PC-9 (cell line): ENCODE measurements at regions of chrX and their contacts with region 1.

Region 1: DNA sequence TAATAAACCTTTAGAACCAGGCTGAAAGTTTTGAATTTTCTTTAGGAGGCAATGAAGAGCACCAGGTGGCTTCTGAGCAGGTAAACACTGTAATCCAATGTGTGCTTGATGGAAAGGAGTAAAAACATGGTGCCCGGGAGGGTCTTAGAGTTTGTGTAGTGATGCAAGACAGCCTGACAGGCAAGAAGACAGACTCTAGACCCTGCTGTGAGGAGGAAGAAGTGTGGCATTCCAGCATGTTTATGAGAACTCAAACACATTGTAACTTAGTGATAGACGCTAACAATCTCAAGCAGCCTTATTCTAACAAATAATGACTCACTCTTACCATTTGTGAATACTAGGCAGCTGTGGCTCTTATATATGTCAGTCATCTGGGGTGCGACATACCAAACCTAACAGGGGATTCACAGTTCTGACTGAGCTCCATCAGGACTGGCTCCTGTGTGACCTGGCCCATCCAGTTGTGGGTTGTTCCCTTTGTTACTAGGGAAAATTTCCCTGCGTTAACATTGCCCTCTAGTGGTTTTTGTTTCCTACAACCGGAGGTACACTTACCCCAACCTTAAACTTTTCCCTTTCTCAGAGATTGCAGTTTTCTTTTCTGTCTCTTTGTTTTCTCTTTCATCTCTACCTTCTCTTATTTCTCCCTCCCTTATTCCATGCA is 53.8 kb downstream of the VSIG4 start:
- DNase-seq: peak; percentile 20 to 35
- H3K4me3 ChIP-seq: no peak overlapping the region
- H3K27ac ChIP-seq: no peak overlapping the region
- H3K4me1 ChIP-seq: no peaks in the 10 kb centered on the region
- H3K27me3 ChIP-seq: no peaks in the 10 kb centered on the region
- CTCF ChIP-seq: peak; percentile 65

Region 2: GRCh38 chrX:65331371-65331770 is 654.7 kb before region 1 on chrX:
- CTCF ChIA-PET with region 1: no interaction called
- POLR2A ChIA-PET with region 1: no interaction called
- intact Hi-C with region 1: no loop called
- DNase-seq: no peak
- H3K4me3 ChIP-seq: no peak overlapping the region
- H3K27ac ChIP-seq: no peak overlapping the region
- H3K4me1 ChIP-seq: no peaks in the 10 kb centered on the region
- H3K27me3 ChIP-seq: no peaks in the 10 kb centered on the region
- CTCF ChIP-seq: no peak

Region 3: DNA sequence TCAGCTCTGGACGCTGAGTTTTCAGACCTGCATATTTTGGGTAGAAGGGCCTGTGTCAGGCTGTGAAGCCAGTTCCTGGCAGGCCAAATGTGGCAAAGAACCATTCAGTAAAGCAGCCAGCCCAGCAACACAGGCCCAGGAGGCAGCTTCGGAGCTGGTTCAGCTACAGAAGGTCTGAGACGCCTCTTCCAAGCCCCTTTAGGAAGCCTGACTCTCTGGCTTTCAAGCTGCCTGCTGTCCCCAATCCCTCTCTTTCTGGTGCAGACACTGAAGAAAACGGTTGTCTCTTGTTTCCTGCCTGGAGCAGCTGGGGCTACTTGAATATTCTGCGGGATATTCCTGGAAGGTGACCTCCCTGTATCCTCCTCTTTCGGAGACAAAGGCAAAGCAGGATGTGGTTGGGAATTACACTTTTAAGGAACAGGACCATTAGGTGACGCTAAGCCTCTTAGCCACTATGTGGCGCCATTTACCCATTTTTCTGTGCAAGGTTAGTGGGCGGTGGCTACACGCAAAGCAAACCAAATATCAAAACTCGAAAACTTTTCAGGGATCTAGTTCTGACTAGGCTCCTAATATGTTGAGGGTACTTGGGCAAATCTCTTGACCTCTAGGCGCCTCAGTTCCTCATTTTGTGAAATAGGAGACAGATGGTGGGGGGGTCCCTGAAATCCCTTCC is 404.3 kb before region 1 on chrX:
- CTCF ChIA-PET with region 1: no interaction called
- POLR2A ChIA-PET with region 1: interaction called, 38 read pairs
- intact Hi-C with region 1: loop called (anchors 1 kb)
- DNase-seq: peak in 1 of 2 experiments; percentile 49
- H3K4me3 ChIP-seq: no peak overlapping the region
- H3K27ac ChIP-seq: no peak overlapping the region
- H3K4me1 ChIP-seq: no peaks in the 10 kb centered on the region
- H3K27me3 ChIP-seq: no peaks in the 10 kb centered on the region
- CTCF ChIP-seq: peak; percentile 81

Region 4: DNA sequence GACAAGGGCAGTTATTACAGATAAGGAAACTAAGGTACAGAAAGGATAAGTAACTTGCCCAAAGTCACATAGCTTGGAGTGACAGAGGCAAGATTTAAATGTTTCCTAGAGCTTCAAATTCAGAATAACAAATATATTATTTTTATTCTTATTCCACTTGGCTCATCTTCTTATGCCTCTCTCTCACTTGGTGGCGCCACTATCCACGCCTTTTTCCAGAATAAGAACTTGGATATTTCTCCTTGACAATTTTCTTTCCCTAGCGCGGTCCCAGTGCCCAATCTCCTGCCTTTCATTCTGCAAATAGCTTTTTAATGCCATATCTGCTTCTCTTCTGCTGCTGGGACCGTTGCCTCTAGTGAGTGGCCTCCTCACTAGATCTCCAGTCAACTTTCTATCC is 240.1 kb before region 1 on chrX:
- CTCF ChIA-PET with region 1: no interaction called
- POLR2A ChIA-PET with region 1: no interaction called
- intact Hi-C with region 1: loop called (anchors 2 kb)
- DNase-seq: no peak
- H3K4me3 ChIP-seq: no peak overlapping the region
- H3K27ac ChIP-seq: no peak overlapping the region
- H3K4me1 ChIP-seq: no peaks in the 10 kb centered on the region
- H3K27me3 ChIP-seq: no peaks in the 10 kb centered on the region
- CTCF ChIP-seq: peak; percentile 42; the same call in 1 of the 2 replicates

Region 5: DNA sequence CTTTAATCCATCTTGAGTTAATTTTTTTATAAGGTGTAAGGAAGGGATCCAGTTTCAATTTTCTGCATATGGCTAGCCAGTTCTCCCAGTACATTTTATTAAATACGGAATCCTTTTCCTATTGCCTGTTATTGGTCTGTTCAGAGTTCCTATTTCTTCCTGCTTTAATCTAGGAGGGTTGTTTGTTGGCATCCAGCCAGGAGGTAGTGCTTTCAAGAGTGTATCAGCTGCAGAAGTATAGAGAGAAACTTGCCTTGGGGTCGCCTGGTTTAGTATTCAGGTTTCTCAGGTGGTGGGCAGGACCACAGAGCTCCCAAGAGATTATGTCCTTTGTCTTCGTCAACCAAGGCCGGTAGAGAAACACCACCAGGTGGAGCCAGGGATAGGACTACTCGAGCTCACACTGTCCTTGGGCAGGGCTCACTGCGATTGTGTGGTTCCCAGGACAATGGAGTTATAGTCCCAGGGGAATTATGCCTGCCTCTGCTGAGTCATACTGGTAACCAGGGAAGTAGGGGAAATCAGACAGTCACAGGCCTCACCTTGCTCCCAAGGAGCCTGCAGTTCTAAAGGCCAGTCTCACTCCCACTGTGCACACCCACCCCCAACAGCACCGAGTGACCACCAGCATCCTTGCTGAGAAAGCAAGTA is 114.3 kb before region 1 on chrX:
- CTCF ChIA-PET with region 1: no interaction called
- POLR2A ChIA-PET with region 1: no interaction called
- intact Hi-C with region 1: loop called (anchors 5 kb)
- DNase-seq: peak; percentile 21 to 47
- H3K4me3 ChIP-seq: no peak overlapping the region
- H3K27ac ChIP-seq: no peak overlapping the region
- H3K4me1 ChIP-seq: no peaks in the 10 kb centered on the region
- H3K27me3 ChIP-seq: no peaks in the 10 kb centered on the region
- CTCF ChIP-seq: peak; percentile 39; the same call in 1 of the 2 replicates

Region 6: GRCh38 chrX:65900850-65901844 is 84.9 kb before region 1 on chrX:
- CTCF ChIA-PET with region 1: no interaction called
- POLR2A ChIA-PET with region 1: no interaction called
- intact Hi-C with region 1: no loop called
- DNase-seq: no peak
- H3K4me3 ChIP-seq: no peak overlapping the region
- H3K27ac ChIP-seq: no peak overlapping the region
- H3K4me1 ChIP-seq: no peaks in the 10 kb centered on the region
- H3K27me3 ChIP-seq: no peaks in the 10 kb centered on the region
- CTCF ChIP-seq: no peak